ENCODE measurements at regions of chr5 and their contacts with region 1.

Region 1: GRCh38 chr5:154214371-154215106 is 24.0 kb downstream of the GALNT10 start:
- DNase-seq: no peak
- H3K4me3 Mint-ChIP-seq: peak overlapping the region; percentile 70
- H3K27ac Mint-ChIP-seq: peak overlapping the region; percentile 86
- H3K4me1 Mint-ChIP-seq: peaks cover 67% of the 10 kb centered on the region
- H3K27me3 Mint-ChIP-seq: no peaks in the 10 kb centered on the region

Region 2: DNA sequence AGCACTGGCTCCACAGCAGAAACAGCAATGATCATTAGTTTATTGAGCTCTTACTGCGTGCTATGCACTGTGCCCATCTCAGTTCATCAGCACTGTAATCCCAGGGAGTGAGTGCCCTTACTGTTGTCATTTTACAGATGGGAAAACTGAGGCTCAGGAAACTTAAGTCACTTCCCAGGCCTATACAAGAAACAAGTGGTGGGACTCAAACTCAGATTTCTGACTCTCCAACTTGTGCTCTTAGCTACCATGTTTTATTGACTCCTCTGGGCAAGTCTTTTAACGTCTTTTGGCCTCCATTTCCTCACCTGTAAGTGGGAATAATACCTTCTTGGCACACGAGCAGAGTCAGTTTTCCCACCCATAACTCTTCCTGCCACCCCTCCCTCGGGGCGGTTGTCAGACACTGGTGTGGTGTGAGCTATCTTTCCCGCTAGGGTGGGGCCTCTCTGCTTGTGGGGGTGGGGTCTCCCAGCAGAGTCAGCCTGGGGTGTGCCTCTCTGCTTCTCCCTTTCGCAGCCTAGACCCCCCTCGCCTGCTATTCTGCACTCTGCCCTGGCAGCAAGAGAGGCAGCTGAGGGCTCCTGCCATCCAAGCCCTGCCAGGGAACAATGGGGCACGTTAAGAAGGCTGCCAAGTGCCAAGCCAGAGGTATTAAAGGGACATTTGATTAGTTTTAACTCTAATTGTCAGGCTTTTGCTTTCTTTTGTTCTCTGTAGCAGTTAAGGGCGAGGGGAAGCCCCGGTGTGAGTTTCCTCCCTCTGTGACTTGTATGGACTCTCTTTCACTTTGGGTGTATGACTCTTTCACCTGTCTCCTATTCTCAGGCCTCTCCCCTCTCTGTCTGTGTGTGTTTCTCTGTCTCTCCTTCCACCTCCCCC is 11.9 kb before region 1 on chr5:
- intact Hi-C with region 1: loop called (anchors 1 kb)
- DNase-seq: peak; percentile 85
- H3K4me3 Mint-ChIP-seq: peak overlapping the region; percentile 83
- H3K27ac Mint-ChIP-seq: peak overlapping the region; percentile 92
- H3K4me1 Mint-ChIP-seq: peaks cover 77% of the 10 kb centered on the region
- H3K27me3 Mint-ChIP-seq: no peaks in the 10 kb centered on the region

Region 3: GRCh38 chr5:154228696-154229095 is 14.2 kb after region 1 on chr5:
- intact Hi-C with region 1: loop called (anchors 1 kb)
- DNase-seq: no peak
- H3K4me3 Mint-ChIP-seq: peak overlapping the region; percentile 52
- H3K27ac Mint-ChIP-seq: peak overlapping the region; percentile 76
- H3K4me1 Mint-ChIP-seq: peaks cover 39% of the 10 kb centered on the region
- H3K27me3 Mint-ChIP-seq: no peaks in the 10 kb centered on the region

Region 4: GRCh38 chr5:154276973-154277331 is 62.4 kb after region 1 on chr5:
- intact Hi-C with region 1: loop called (anchors 1 kb)
- DNase-seq: no peak
- H3K4me3 Mint-ChIP-seq: no peak overlapping the region
- H3K27ac Mint-ChIP-seq: peak overlapping the region; percentile 23
- H3K4me1 Mint-ChIP-seq: peaks cover 56% of the 10 kb centered on the region
- H3K27me3 Mint-ChIP-seq: no peaks in the 10 kb centered on the region

Measured in activated CD4-positive, alpha-beta T cell treated with anti-CD3 and anti-CD28 coated beads, Interleukin-2, amount 10 ng/mL, durations not matched to agents 24 days and 14 days (primary cell).